ENCODE measurements at regions of chr6 and their contacts with region 1.

Region 1: GRCh38 chr6:7424967-7425807 is 35.6 kb downstream of the RIOK1 start:
- DNase-seq: peak; percentile 46
- ATAC-seq: peak; percentile 86 to 94

Region 2: DNA sequence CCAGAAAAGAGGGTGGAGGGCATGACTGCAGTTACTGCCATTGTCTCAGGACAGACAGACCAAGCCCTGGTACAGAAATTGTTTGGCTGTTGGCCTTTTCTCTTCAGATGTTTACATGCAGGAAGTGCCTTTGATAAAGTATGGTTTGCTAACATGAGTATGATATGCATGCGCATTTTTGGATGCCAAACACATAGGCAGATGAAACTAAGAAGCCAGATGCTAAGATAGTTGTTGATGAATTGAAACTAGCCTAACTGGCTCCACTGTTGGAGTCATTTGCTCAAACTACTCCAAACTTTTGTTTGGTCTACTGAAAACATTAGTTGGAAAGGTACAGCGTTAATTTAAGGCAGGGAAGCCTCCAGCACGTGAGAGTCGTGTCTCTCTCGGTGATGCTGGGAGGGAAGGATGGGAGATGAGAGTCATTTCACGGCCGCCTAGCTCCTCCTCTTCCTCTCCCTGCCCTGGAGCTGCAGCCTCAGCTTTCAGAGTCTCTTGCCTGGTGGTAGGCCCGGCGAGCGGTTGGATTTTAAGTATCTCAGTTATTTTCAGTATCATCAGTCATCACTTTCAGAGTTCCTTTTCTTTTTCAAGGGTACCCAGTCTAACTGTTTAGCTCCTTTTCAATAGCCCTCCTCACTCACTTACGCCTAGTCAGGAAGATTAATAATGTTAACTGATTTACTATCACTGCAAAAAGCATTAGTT is 287.7 kb before region 1 on chr6:
- intact Hi-C with region 1: no loop called
- DNase-seq: peak; percentile 65
- ATAC-seq: peak; percentile 16 to 54

Region 3: GRCh38 chr6:7489376-7489775 is 64.2 kb after region 1 on chr6:
- intact Hi-C with region 1: no loop called
- DNase-seq: no peak
- ATAC-seq: no peak

Region 4: DNA sequence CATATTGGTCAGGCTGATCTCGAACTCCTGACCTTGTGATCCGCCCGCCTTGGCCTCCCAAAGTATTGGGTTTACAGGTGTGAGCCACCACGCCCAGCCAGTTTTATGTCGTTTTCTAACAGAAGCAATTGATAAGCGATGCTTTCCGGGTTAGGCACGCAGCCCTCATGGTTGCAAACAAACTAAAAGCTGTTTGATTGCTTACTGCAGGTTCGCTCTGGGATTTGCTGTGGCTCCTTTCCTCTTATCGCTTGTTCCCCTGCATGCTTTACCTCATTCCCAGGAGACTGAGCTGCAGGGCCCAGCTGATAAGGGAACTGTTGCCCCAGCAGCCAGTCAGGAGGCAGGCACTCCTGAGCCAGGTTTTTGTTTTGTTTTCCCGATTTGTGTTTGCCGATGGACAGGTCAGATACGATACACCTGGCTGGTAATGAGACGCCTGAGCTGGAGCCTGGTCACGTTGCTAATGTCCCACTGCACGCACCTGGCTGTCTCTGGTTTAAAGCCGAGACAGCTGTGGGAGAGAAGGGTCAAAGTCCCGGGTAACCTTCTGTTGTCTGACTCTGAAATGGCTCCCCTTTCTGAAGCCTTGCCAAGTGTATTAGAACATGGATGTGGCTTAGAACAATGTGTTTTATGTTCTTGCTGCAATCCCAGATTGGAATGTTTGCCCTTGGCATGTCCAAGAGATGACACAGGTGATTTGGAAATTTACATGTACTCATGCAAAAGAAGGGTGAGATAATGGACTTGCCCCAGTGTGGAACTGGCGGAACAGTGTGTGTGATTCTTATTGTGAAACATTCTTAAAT is 136.2 kb after region 1 on chr6:
- intact Hi-C with region 1: loop called in 1 of 2 experiments (anchors 5 kb)
- DNase-seq: no peak
- ATAC-seq: peak; percentile 58 to 67

Region 5: GRCh38 chr6:7615611-7616383 is 190.6 kb after region 1 on chr6:
- intact Hi-C with region 1: loop called in 1 of 2 experiments (anchors 5 kb)
- DNase-seq: no peak
- ATAC-seq: peak; percentile 59 to 64